CD8-positive, alpha-beta T cell (primary cell): ENCODE measurements at regions of chr1 and their contacts with region 1.

Region 1: DNA sequence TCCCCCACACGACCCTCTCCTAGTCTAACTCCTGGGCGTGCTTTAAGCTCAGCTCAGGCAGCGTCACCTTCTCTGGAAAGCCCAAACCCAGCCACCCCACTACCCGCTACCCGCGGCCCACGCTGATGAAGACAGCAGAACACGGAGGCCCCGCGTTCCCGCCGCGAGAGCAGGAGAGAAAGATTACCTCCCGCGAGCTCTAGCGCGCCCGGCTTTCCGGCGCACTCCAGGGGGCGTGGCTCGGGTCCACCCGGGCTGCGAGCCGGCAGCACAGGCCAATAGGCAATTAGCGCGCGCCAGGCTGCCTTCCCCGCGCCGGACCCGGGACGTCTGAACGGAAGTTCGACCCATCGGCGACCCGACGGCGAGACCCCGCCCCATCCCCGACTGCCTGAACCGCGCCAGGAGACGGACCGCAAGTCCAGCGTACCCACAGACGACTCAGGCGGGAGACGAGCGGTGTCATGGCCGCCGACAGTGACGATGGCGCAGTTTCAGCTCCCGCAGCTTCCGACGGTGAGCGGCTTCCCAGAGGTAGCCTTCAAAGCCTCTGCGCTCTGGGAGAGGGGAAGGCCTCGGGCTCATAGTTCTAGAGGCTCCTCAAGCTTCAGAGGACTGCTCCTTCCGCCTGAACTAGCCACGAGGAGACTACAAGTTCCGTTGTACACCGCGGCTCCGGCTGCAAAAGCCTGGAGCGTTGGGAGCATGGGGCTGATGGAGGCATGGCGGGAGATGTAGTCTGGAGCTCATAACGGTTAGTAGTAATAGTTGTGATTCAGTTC is at the starts of genes MUTYH and TOE1:
- DNase-seq: peak; percentile 79 to 94 (median 89)
- ATAC-seq: peak; percentile 81
- H3K4me3 ChIP-seq: peak within 1 kb of the TSS; percentile 88 to 94
- H3K4me3 Mint-ChIP-seq: peak within 1 kb of the TSS; percentile 98
- H3K27ac ChIP-seq: peak within 1 kb of the TSS; percentile 97 to 99
- H3K27ac Mint-ChIP-seq: peak within 1 kb of the TSS; percentile 97
- H3K4me1 ChIP-seq: peaks cover 35% of the 10 kb centered on the region
- H3K4me1 Mint-ChIP-seq: peaks cover 50% of the 10 kb centered on the region
- H3K27me3 ChIP-seq: no peaks in the 10 kb centered on the region
- H3K27me3 Mint-ChIP-seq: no peaks in the 10 kb centered on the region
- CTCF ChIP-seq: no peak
- total RNA-seq, gene MUTYH: 53.0 to 62.5 TPM
- total RNA-seq, gene TOE1: 53.8 to 56.5 TPM

Region 2: GRCh38 chr1:44775078-44775929 is 564.7 kb before region 1 on chr1 and contains the start of gene RPS8:
- CTCF ChIA-PET with region 1: no interaction called
- POLR2A ChIA-PET with region 1: interaction called, 13 read pairs
- intact Hi-C with region 1: loop called in 1 of 2 experiments (anchors 5 kb)
- DNase-seq: peak; percentile 77 to 96 (median 90)
- ATAC-seq: peak; percentile 80
- H3K4me3 ChIP-seq: peak within 1 kb of the TSS; percentile 84 to 94
- H3K4me3 Mint-ChIP-seq: peak within 1 kb of the TSS; percentile 92
- H3K27ac ChIP-seq: peak within 1 kb of the TSS; percentile 92 to 95
- H3K27ac Mint-ChIP-seq: peak within 1 kb of the TSS; percentile 98
- H3K4me1 ChIP-seq: peaks cover 25% of the 10 kb centered on the region
- H3K4me1 Mint-ChIP-seq: peaks cover 39% of the 10 kb centered on the region
- H3K27me3 ChIP-seq: no peaks in the 10 kb centered on the region
- H3K27me3 Mint-ChIP-seq: no peaks in the 10 kb centered on the region
- CTCF ChIP-seq: no peak
- total RNA-seq, gene RPS8: 3,381 to 3,465 TPM

Region 3: GRCh38 chr1:44985747-44986359 is 354.1 kb before region 1 on chr1:
- CTCF ChIA-PET with region 1: no interaction called
- POLR2A ChIA-PET with region 1: interaction called, 9 read pairs
- intact Hi-C with region 1: loop called in 1 of 2 experiments (anchors 1 kb)
- DNase-seq: no peak
- ATAC-seq: no peak
- H3K4me3 ChIP-seq: peak overlapping the region; percentile 70 to 85
- H3K4me3 Mint-ChIP-seq: peak overlapping the region; percentile 97
- H3K27ac ChIP-seq: peak overlapping the region; percentile 31 to 42
- H3K27ac Mint-ChIP-seq: peak overlapping the region; percentile 93
- H3K4me1 ChIP-seq: peaks cover 15% of the 10 kb centered on the region
- H3K4me1 Mint-ChIP-seq: peaks cover 30% of the 10 kb centered on the region
- H3K27me3 ChIP-seq: no peaks in the 10 kb centered on the region
- H3K27me3 Mint-ChIP-seq: no peaks in the 10 kb centered on the region
- CTCF ChIP-seq: no peak

Region 4: DNA sequence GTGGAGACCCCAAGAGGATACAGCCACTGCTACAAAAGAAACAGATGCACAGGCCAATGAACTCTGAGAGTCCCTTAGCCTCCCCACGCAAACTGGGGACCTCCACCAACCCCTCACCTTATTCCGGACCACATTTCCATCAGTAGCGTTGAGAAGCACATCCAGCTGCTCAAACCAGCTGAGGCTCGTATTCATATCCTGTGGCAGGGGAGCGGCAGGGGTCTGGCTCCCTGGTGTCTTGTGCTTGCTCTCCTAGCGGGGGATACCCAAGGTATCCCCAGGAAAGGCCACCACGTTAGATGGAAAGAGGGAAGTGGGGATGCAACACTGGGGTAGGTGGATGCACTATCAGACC is 159.4 kb after region 1 on chr1:
- CTCF ChIA-PET with region 1: interaction called, 4 read pairs
- POLR2A ChIA-PET with region 1: interaction called, 18 read pairs
- intact Hi-C with region 1: loop called (anchors 1 kb)
- DNase-seq: peak in 1 of 9 experiments; percentile 55
- ATAC-seq: no peak
- H3K4me3 ChIP-seq: peak overlapping the region; percentile 59 to 83
- H3K4me3 Mint-ChIP-seq: peak overlapping the region; percentile 93
- H3K27ac ChIP-seq: peak overlapping the region; percentile 39 to 76
- H3K27ac Mint-ChIP-seq: peak overlapping the region; percentile 90
- H3K4me1 ChIP-seq: peaks cover 20% of the 10 kb centered on the region
- H3K4me1 Mint-ChIP-seq: peaks cover 37% of the 10 kb centered on the region
- H3K27me3 ChIP-seq: no peaks in the 10 kb centered on the region
- H3K27me3 Mint-ChIP-seq: no peaks in the 10 kb centered on the region
- CTCF ChIP-seq: no peak

Region 5: DNA sequence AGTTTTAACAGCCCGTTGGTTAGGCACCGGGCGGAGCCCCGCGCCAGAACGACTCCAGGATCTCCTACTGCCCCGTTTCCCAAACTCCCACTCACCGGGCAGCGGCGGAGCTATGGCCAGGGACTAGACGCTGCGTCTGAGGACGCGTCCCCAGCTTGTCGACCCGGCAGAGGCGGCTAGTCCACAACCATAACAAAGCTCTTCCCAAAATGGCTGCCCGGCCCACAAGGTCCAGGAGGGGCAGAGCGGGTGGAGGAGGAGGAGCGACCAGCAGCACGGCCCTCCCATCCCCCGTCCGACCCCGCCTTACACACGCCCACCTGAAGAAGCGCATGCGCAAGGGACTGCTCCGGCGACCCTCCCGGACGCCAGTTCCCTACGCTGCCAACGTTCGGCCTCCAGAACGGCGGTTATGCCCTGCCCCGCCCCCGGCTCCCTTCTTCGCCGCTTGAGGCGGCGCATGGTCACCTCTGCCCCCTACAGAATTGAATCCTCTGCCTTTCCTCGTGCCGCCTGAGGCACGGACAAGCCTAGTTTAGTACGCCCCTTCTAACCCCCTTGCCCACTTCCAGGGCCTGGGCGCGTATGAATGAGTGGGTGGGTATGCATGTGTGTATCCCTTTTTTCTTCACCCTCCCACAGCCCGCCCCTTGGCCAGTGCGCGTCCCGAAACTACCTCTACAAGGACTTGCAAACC is 346.5 kb after region 1 on chr1 and contains the start of gene GPBP1L1:
- CTCF ChIA-PET with region 1: no interaction called
- POLR2A ChIA-PET with region 1: interaction called, 6 read pairs
- intact Hi-C with region 1: loop called (anchors 1 to 2 kb)
- DNase-seq: peak; percentile 95 to 98 (median 98)
- ATAC-seq: peak; percentile 72
- H3K4me3 ChIP-seq: peak within 1 kb of the TSS; percentile 99
- H3K4me3 Mint-ChIP-seq: peak within 1 kb of the TSS; percentile 97
- H3K27ac ChIP-seq: peak within 1 kb of the TSS; percentile 84 to 92
- H3K27ac Mint-ChIP-seq: peak within 1 kb of the TSS; percentile 100
- H3K4me1 ChIP-seq: peaks cover 39% of the 10 kb centered on the region
- H3K4me1 Mint-ChIP-seq: peaks cover 59% of the 10 kb centered on the region
- H3K27me3 ChIP-seq: no peaks in the 10 kb centered on the region
- H3K27me3 Mint-ChIP-seq: no peaks in the 10 kb centered on the region
- CTCF ChIP-seq: no peak
- total RNA-seq, gene GPBP1L1: 125 to 128 TPM